CD4-positive, alpha-beta memory T cell (primary cell): ENCODE measurements at regions of chr20 and their contacts with region 1.

Region 1: DNA sequence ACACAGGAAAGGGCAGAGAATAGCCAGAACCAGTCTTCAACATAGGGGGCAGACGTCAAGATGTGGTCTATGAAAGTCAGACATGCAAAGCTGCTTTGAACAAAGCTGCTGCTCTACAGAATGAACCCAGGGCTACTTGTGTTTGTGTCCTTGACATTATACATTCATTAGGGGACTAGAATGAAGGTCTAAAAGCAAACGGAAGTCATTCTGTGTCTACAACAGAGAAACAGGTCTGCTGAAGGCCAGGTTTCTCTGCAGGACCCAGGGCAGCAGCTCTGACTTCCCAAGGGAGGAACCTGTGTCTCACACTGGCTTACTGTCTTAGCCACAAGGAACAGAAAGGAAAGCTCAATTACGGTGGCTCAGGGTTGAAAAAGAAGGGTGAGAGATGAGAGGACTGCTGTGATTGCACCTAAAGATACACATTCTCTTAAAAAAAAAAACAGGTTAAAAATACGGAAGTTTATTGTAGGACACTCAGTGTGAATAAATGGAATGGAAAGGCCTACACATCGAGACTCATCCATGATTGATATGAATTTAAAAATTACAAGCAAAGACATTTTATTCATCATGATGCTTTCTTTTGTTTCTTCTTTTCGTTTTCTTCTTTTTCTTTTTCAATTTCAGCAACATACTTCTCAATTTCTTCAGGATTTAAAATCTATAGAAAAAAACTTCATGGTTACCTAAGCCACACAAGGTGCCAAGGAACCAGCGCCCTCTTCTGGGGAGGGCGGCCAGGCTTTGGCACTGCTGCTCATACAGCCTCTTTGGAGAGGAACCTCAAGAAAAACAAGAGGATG is 6.7 kb downstream of the PSMA7 start:
- DNase-seq: peak; percentile 69 to 74 (median 74)
- H3K4me3 ChIP-seq: no peak overlapping the region
- H3K4me3 Mint-ChIP-seq: peak overlapping the region in 1 of 8 donors; percentile 50
- H3K27ac ChIP-seq: no peak overlapping the region
- H3K27ac Mint-ChIP-seq: peak overlapping the region; percentile 33 to 93 (median 91)
- H3K4me1 ChIP-seq: peaks cover 19% of the 10 kb centered on the region
- H3K4me1 Mint-ChIP-seq: peaks cover 30 to 57% (median 37%) of the 10 kb centered on the region in 4 donors
- H3K27me3 ChIP-seq: no peaks in the 10 kb centered on the region
- H3K27me3 Mint-ChIP-seq: no peaks in the 10 kb centered on the region

Region 2: DNA sequence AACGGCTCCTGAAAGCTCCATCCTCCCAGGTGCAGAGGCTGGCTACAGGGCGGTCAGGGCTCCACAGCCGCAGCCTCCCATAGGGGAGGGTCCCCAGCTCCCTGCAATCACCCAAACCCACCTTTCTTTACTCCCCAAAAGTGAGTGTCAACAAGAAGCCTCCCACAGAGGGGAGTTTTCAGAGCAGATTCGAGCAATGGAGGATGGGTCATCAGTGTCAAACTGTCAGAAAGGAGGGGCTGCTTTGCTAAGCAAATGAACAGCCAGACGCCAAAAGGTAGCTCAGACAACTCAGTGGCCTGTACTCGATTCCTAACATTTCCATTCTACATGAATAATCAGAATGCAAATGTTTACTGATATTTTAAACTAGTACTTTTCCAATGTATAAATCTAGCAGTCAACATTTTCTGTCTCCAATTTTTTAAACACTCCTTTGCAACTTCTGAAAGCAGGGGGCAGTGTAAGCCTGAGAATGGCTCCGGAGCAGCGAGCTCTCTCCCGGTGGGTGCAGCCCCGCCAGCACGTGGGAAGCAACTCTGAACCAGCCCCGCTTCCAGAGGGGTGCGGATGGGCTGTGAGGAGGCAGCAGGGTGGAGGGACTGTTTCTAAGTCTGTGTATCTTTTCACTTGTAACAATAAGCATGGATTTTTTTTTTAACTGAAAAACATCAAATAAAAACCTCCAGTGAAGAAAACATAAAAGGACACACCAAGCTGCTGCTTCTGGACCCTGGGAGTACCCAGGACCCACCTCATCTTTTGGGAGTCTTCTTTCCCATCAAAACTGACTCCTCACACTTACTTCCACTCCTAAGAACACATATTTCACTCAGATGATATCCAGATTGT is 125.7 kb before region 1 on chr20:
- CTCF ChIA-PET with region 1: interaction called, 114 read pairs
- POLR2A ChIA-PET with region 1: interaction called, 15 read pairs
- intact Hi-C with region 1: loop called (anchors 1 kb)
- DNase-seq: peak; percentile 63 to 70 (median 68)
- H3K4me3 ChIP-seq: no peak overlapping the region
- H3K4me3 Mint-ChIP-seq: peak overlapping the region in 1 of 8 donors; percentile 3
- H3K27ac ChIP-seq: no peak overlapping the region
- H3K27ac Mint-ChIP-seq: peak overlapping the region in 5 of 7 donors; percentile 4 to 76 (median 51)
- H3K4me1 ChIP-seq: no peaks in the 10 kb centered on the region
- H3K4me1 Mint-ChIP-seq: peaks cover 7 to 14% (median 9%) of the 10 kb centered on the region in 4 donors
- H3K27me3 ChIP-seq: no peaks in the 10 kb centered on the region
- H3K27me3 Mint-ChIP-seq: no peaks in the 10 kb centered on the region

Region 3: GRCh38 chr20:62025832-62026563 is 110.5 kb before region 1 on chr20:
- CTCF ChIA-PET with region 1: interaction called, 6 read pairs
- POLR2A ChIA-PET with region 1: interaction called, 3 read pairs
- intact Hi-C with region 1: loop called (anchors 5 kb)
- DNase-seq: peak in 1 of 5 donors; percentile 14
- H3K4me3 ChIP-seq: no peak overlapping the region
- H3K4me3 Mint-ChIP-seq: peak overlapping the region in 1 of 8 donors; percentile 39
- H3K27ac ChIP-seq: no peak overlapping the region
- H3K27ac Mint-ChIP-seq: peak overlapping the region in 6 of 7 donors; percentile 23 to 73 (median 41)
- H3K4me1 ChIP-seq: peaks cover 20% of the 10 kb centered on the region
- H3K4me1 Mint-ChIP-seq: peaks cover 30 to 69% (median 32%) of the 10 kb centered on the region in 4 donors
- H3K27me3 ChIP-seq: no peaks in the 10 kb centered on the region
- H3K27me3 Mint-ChIP-seq: no peaks in the 10 kb centered on the region

Region 4: GRCh38 chr20:62121776-62122631 is 14.5 kb before region 1 on chr20 and contains the start of gene LSM14B:
- CTCF ChIA-PET with region 1: interaction called, 35 read pairs
- POLR2A ChIA-PET with region 1: interaction called, 115 read pairs
- intact Hi-C with region 1: no loop called
- DNase-seq: peak; percentile 93 to 98 (median 97)
- H3K4me3 ChIP-seq: peak within 1 kb of the TSS; percentile 61 to 73
- H3K4me3 Mint-ChIP-seq: peak within 1 kb of the TSS; percentile 90 to 95 (median 92)
- H3K27ac ChIP-seq: peak within 1 kb of the TSS; percentile 76
- H3K27ac Mint-ChIP-seq: peak within 1 kb of the TSS; percentile 93 to 99 (median 97)
- H3K4me1 ChIP-seq: peaks cover 48% of the 10 kb centered on the region
- H3K4me1 Mint-ChIP-seq: peaks cover 32 to 71% (median 49%) of the 10 kb centered on the region in 4 donors
- H3K27me3 ChIP-seq: no peaks in the 10 kb centered on the region
- H3K27me3 Mint-ChIP-seq: no peaks in the 10 kb centered on the region
- total RNA-seq, gene LSM14B: 48.5 to 50.3 TPM

Region 5: GRCh38 chr20:62159839-62160238 is 23.4 kb after region 1 on chr20:
- CTCF ChIA-PET with region 1: no interaction called
- POLR2A ChIA-PET with region 1: no interaction called
- intact Hi-C with region 1: no loop called
- DNase-seq: no peak
- H3K4me3 ChIP-seq: no peak overlapping the region
- H3K4me3 Mint-ChIP-seq: peak overlapping the region in 3 of 8 donors; percentile 18 to 46 (median 22)
- H3K27ac ChIP-seq: no peak overlapping the region
- H3K27ac Mint-ChIP-seq: peak overlapping the region in 5 of 7 donors; percentile 52 to 83 (median 68)
- H3K4me1 ChIP-seq: peaks cover 12% of the 10 kb centered on the region
- H3K4me1 Mint-ChIP-seq: peaks cover 4 to 17% (median 5%) of the 10 kb centered on the region in 4 donors
- H3K27me3 ChIP-seq: no peaks in the 10 kb centered on the region
- H3K27me3 Mint-ChIP-seq: no peaks in the 10 kb centered on the region

Region 6: GRCh38 chr20:62191781-62192559 is 55.5 kb after region 1 on chr20:
- CTCF ChIA-PET with region 1: no interaction called
- POLR2A ChIA-PET with region 1: no interaction called
- intact Hi-C with region 1: no loop called
- DNase-seq: no peak
- H3K4me3 ChIP-seq: no peak overlapping the region
- H3K4me3 Mint-ChIP-seq: no peak overlapping the region
- H3K27ac ChIP-seq: no peak overlapping the region
- H3K27ac Mint-ChIP-seq: peak overlapping the region in 1 of 7 donors; percentile 53
- H3K4me1 ChIP-seq: no peaks in the 10 kb centered on the region
- H3K4me1 Mint-ChIP-seq: peaks cover 3 to 13% (median 8%) of the 10 kb centered on the region in 4 donors
- H3K27me3 ChIP-seq: no peaks in the 10 kb centered on the region
- H3K27me3 Mint-ChIP-seq: no peaks in the 10 kb centered on the region